B cell (primary cell): ENCODE measurements at regions of chr14 and their contacts with region 1.

Region 1: GRCh38 chr14:74762917-74763802 is at the start of gene YLPM1:
- DNase-seq: peak; percentile 98
- ATAC-seq: peak; percentile 93
- H3K4me3 ChIP-seq: peak within 1 kb of the TSS; percentile 61 to 98 (median 94)
- H3K4me3 Mint-ChIP-seq: peak within 1 kb of the TSS; percentile 93
- H3K27ac ChIP-seq: peak within 1 kb of the TSS; percentile 88 to 95
- H3K27ac Mint-ChIP-seq: peak within 1 kb of the TSS; percentile 98
- H3K4me1 ChIP-seq: peaks cover 38 to 46% of the 10 kb centered on the region in 2 donors
- H3K4me1 Mint-ChIP-seq: peaks cover 52% of the 10 kb centered on the region
- H3K27me3 ChIP-seq: no peaks in the 10 kb centered on the region
- H3K27me3 Mint-ChIP-seq: no peaks in the 10 kb centered on the region
- CTCF ChIP-seq: peak; percentile 73
- total RNA-seq, gene YLPM1: 116 and 124 TPM in 2 replicates

Region 2: DNA sequence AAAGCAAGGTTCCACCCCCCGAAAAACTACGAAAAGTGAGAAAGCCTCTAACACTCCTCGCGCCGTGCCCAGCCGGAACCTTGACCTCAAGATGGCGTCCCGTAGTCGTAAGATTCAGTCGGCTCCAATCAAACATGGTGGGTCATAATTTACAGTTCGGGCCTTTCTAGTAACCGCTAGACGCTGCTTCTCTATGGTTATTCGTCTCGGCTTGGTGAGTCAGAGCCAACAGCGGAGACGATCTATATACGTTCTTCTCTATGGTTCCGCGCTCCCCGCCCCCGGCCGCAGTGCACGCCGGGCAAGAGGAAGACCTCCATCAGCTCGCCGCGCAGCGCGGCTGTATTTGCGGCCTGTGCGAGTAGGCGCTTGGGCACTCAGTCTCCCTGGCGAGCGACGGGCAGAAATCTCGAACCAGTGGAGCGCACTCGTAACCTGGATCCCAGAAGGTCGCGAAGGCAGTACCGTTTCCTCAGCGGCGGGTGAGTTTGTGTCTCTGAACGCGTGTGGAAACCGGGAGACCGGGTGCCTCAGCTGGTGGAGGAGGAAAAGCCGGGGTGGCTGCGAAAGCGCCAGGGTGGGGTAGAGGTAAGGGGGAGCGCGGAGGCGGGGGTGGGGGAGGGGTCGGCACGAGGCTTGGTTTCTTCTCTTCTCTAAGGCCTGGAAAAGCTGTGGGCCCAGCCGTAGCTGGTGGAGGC is 1704.8 kb before region 1 on chr14 and contains the start of gene RBM25:
- CTCF ChIA-PET with region 1: no interaction called
- POLR2A ChIA-PET with region 1: no interaction called
- intact Hi-C with region 1: loop called (anchors 5 kb)
- DNase-seq: peak; percentile 98
- ATAC-seq: peak; percentile 94
- H3K4me3 ChIP-seq: peak within 1 kb of the TSS; percentile 77 to 94 (median 84)
- H3K4me3 Mint-ChIP-seq: no peak within 1 kb of the TSS
- H3K27ac ChIP-seq: peak within 1 kb of the TSS; percentile 84 to 91
- H3K27ac Mint-ChIP-seq: no peak within 1 kb of the TSS
- H3K4me1 ChIP-seq: peaks cover 25 to 28% of the 10 kb centered on the region in 2 donors
- H3K4me1 Mint-ChIP-seq: peaks cover 39% of the 10 kb centered on the region
- H3K27me3 ChIP-seq: no peaks in the 10 kb centered on the region
- H3K27me3 Mint-ChIP-seq: no peaks in the 10 kb centered on the region
- CTCF ChIP-seq: no peak
- total RNA-seq, gene RBM25: 137 and 151 TPM in 2 replicates

Region 3: DNA sequence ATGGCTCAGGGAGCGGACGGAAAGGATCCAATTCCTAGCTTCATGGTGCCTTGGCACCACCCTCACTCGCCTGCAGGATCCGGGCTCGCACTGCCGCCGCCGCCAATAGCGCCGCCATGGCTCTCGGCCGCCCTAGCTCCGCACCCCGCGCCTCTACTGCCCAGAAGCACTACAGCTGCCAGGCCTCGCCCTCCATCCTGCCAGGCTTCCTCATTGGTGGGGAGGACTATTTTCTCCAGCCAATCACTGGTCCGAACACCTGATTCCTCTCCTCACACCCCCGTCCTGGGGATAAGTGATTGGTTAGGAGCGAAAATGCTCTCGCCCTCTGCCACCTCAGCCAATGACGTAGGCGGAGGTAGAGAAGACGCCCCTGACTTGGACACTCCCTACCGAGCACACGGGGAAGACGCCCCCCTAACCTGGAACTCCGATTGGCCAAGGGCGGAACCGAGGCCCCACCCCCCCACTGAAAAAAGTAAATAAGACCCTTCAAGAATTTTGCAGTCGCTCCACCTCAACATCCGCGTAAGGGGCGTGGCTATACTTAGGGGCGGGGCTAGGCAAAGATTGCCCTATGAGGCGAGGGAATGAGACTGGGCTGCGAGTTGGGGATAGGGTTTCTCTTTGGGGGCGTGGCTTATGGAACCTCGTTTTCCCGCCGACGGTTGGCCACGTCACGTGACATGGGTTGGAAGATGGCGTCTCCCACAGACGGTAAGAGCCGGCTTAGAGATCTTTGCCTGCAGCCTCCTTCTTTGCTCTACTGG is 678.7 kb before region 1 on chr14 and contains the starts of genes ALDH6A1 and LIN52:
- CTCF ChIA-PET with region 1: no interaction called
- POLR2A ChIA-PET with region 1: no interaction called
- intact Hi-C with region 1: loop called (anchors 2 kb)
- DNase-seq: peak; percentile 100
- ATAC-seq: peak; percentile 85
- H3K4me3 ChIP-seq: peak within 1 kb of the TSS; percentile 75 to 79 (median 77)
- H3K4me3 Mint-ChIP-seq: peak within 1 kb of the TSS; percentile 95
- H3K27ac ChIP-seq: peak within 1 kb of the TSS; percentile 34 to 79
- H3K27ac Mint-ChIP-seq: peak within 1 kb of the TSS; percentile 88
- H3K4me1 ChIP-seq: peaks cover 23 to 24% of the 10 kb centered on the region in 2 donors
- H3K4me1 Mint-ChIP-seq: peaks cover 35% of the 10 kb centered on the region
- H3K27me3 ChIP-seq: no peaks in the 10 kb centered on the region
- H3K27me3 Mint-ChIP-seq: no peaks in the 10 kb centered on the region
- CTCF ChIP-seq: no peak
- total RNA-seq, gene ALDH6A1: 14.9 and 16.7 TPM in 2 replicates
- total RNA-seq, gene LIN52: 13.1 and 15.5 TPM in 2 replicates

Region 4: GRCh38 chr14:74712499-74713394 is 50.4 kb before region 1 on chr14 and contains the starts of genes AREL1 and FCF1:
- CTCF ChIA-PET with region 1: interaction called, 7 read pairs
- POLR2A ChIA-PET with region 1: interaction called, 3 read pairs
- intact Hi-C with region 1: loop called (anchors 1 kb)
- DNase-seq: peak; percentile 91
- ATAC-seq: peak; percentile 94
- H3K4me3 ChIP-seq: peak within 1 kb of the TSS; percentile 64 to 97 (median 87)
- H3K4me3 Mint-ChIP-seq: peak within 1 kb of the TSS; percentile 88
- H3K27ac ChIP-seq: peak within 1 kb of the TSS; percentile 83 to 90
- H3K27ac Mint-ChIP-seq: peak within 1 kb of the TSS; percentile 85
- H3K4me1 ChIP-seq: peaks cover 18 to 20% of the 10 kb centered on the region in 2 donors
- H3K4me1 Mint-ChIP-seq: peaks cover 38% of the 10 kb centered on the region
- H3K27me3 ChIP-seq: no peaks in the 10 kb centered on the region
- H3K27me3 Mint-ChIP-seq: no peaks in the 10 kb centered on the region
- CTCF ChIP-seq: no peak
- total RNA-seq, gene AREL1: 39.4 and 44.4 TPM in 2 replicates
- total RNA-seq, gene FCF1: 40.6 and 41.6 TPM in 2 replicates

Region 5: GRCh38 chr14:74747237-74747636 is 15.9 kb before region 1 on chr14:
- CTCF ChIA-PET with region 1: no interaction called
- POLR2A ChIA-PET with region 1: no interaction called
- intact Hi-C with region 1: no loop called
- DNase-seq: no peak
- ATAC-seq: no peak
- H3K4me3 ChIP-seq: no peak overlapping the region
- H3K4me3 Mint-ChIP-seq: no peak overlapping the region
- H3K27ac ChIP-seq: no peak overlapping the region
- H3K27ac Mint-ChIP-seq: no peak overlapping the region
- H3K4me1 ChIP-seq: no peaks in the 10 kb centered on the region
- H3K4me1 Mint-ChIP-seq: no peaks in the 10 kb centered on the region
- H3K27me3 ChIP-seq: no peaks in the 10 kb centered on the region
- H3K27me3 Mint-ChIP-seq: peaks cover 4% of the 10 kb centered on the region
- CTCF ChIP-seq: no peak

Region 6: GRCh38 chr14:74881431-74882361 is 118.5 kb after region 1 on chr14 and contains the start of gene DLST:
- CTCF ChIA-PET with region 1: no interaction called
- POLR2A ChIA-PET with region 1: no interaction called
- intact Hi-C with region 1: loop called (anchors 1 kb)
- DNase-seq: peak; percentile 93
- ATAC-seq: peak; percentile 83
- H3K4me3 ChIP-seq: peak within 1 kb of the TSS; percentile 76 to 94 (median 79)
- H3K4me3 Mint-ChIP-seq: peak within 1 kb of the TSS; percentile 100
- H3K27ac ChIP-seq: peak within 1 kb of the TSS; percentile 80 to 89
- H3K27ac Mint-ChIP-seq: peak within 1 kb of the TSS; percentile 99
- H3K4me1 ChIP-seq: peaks cover 29 to 33% of the 10 kb centered on the region in 2 donors
- H3K4me1 Mint-ChIP-seq: peaks cover 57% of the 10 kb centered on the region
- H3K27me3 ChIP-seq: no peaks in the 10 kb centered on the region
- H3K27me3 Mint-ChIP-seq: no peaks in the 10 kb centered on the region
- CTCF ChIP-seq: no peak
- total RNA-seq, gene DLST: 89.5 and 100 TPM in 2 replicates

Region 7: GRCh38 chr14:75176142-75176820 is 413.1 kb after region 1 on chr14 and contains the start of gene TMED10:
- CTCF ChIA-PET with region 1: no interaction called
- POLR2A ChIA-PET with region 1: no interaction called
- intact Hi-C with region 1: loop called (anchors 2 kb)
- DNase-seq: peak; percentile 97
- ATAC-seq: peak; percentile 74
- H3K4me3 ChIP-seq: peak within 1 kb of the TSS; percentile 82 to 99 (median 91)
- H3K4me3 Mint-ChIP-seq: peak within 1 kb of the TSS; percentile 92
- H3K27ac ChIP-seq: peak within 1 kb of the TSS; percentile 97 to 99
- H3K27ac Mint-ChIP-seq: peak within 1 kb of the TSS; percentile 97
- H3K4me1 ChIP-seq: peaks cover 17 to 22% of the 10 kb centered on the region in 2 donors
- H3K4me1 Mint-ChIP-seq: peaks cover 32% of the 10 kb centered on the region
- H3K27me3 ChIP-seq: no peaks in the 10 kb centered on the region
- H3K27me3 Mint-ChIP-seq: no peaks in the 10 kb centered on the region
- CTCF ChIP-seq: no peak
- total RNA-seq, gene TMED10: 111 and 119 TPM in 2 replicates

Region 8: GRCh38 chr14:75430526-75430925 is 667.4 kb after region 1 on chr14:
- CTCF ChIA-PET with region 1: no interaction called
- POLR2A ChIA-PET with region 1: no interaction called
- intact Hi-C with region 1: no loop called
- DNase-seq: no peak
- ATAC-seq: no peak
- H3K4me3 ChIP-seq: no peak overlapping the region
- H3K4me3 Mint-ChIP-seq: no peak overlapping the region
- H3K27ac ChIP-seq: no peak overlapping the region
- H3K27ac Mint-ChIP-seq: peak overlapping the region; percentile 5
- H3K4me1 ChIP-seq: peaks cover 23 to 34% of the 10 kb centered on the region in 2 donors
- H3K4me1 Mint-ChIP-seq: peaks cover 46% of the 10 kb centered on the region
- H3K27me3 ChIP-seq: no peaks in the 10 kb centered on the region
- H3K27me3 Mint-ChIP-seq: no peaks in the 10 kb centered on the region
- CTCF ChIP-seq: no peak

Region 9: DNA sequence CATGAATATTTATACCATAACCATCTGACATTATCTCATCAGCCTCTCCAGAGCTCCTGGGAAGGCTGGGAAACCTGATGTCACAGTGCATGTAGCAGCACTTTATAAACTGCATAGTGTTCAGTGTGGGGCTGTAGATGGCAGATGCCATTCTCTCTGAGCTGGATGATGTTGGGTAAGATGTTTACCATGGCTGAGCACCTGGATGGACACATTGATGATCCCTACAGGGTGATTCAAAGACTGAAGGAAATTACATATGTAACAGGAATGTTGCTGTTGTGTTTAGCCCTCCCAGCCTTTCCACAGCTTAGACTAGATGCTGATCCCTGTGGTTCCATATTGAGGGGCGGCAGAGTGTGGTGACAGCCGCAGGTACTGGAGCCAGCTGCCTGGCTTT is 1259.8 kb after region 1 on chr14:
- CTCF ChIA-PET with region 1: no interaction called
- POLR2A ChIA-PET with region 1: no interaction called
- intact Hi-C with region 1: no loop called
- DNase-seq: no peak
- ATAC-seq: no peak
- H3K4me3 ChIP-seq: no peak overlapping the region
- H3K4me3 Mint-ChIP-seq: no peak overlapping the region
- H3K27ac ChIP-seq: no peak overlapping the region
- H3K27ac Mint-ChIP-seq: no peak overlapping the region
- H3K4me1 ChIP-seq: no peaks in the 10 kb centered on the region
- H3K4me1 Mint-ChIP-seq: no peaks in the 10 kb centered on the region
- H3K27me3 ChIP-seq: no peaks in the 10 kb centered on the region
- H3K27me3 Mint-ChIP-seq: no peaks in the 10 kb centered on the region
- CTCF ChIP-seq: no peak